Activated CD4-positive, alpha-beta T cell treated with anti-CD3 and anti-CD28 coated beads, Interleukin-2, amount 10 ng/mL, durations not matched to agents 24 days and 14 days (primary cell): ENCODE measurements at regions of chr6 and their contacts with region 1.

Region 1: GRCh38 chr6:24883618-24884017 is 52.1 kb downstream of the RIPOR2 start:
- DNase-seq: no peak
- H3K4me3 Mint-ChIP-seq: peak overlapping the region; percentile 67
- H3K27ac Mint-ChIP-seq: peak overlapping the region; percentile 94
- H3K4me1 Mint-ChIP-seq: peaks cover 60% of the 10 kb centered on the region
- H3K27me3 Mint-ChIP-seq: no peaks in the 10 kb centered on the region

Region 2: DNA sequence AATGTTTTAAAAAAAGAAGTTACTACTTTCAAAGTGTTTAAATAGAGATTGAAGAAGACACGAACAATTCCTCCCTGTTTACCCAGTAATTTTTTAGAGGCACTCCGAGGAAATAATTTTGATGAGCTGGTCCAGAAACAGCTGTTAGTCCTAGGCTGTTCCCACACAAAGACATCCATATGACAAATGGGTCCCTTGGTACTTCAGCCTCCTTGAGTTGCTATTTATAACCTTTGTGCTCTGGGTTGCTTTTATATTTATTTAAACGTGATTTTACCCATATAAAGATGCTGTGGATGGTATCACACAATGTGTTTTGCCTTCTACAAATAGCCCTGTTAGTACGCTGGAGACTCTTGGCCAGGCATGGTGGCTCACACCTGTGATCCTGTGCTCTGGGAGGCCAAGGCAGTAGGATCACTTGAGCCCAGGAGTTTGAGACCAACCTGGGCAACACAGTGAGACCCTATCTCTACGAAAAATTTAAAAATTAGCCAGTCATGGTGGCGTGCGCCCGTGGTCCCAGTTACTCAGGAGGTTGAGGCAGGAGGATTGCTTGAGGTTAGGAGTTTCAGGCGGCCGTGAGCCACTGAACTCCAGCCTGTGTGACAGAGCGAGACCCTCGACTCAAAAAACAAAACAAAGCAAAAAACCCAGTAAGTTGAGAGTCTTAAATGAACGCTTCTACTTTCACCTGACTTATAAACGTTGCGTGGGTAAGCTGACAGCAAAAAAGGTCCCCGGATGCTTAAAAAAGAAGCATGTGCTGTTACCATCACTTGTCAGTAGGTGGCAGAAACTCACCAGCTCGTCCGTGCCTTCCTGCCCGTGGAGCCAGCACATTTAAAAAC is 28.0 kb before region 1 on chr6:
- intact Hi-C with region 1: loop called (anchors 1 kb)
- DNase-seq: peak; percentile 91
- H3K4me3 Mint-ChIP-seq: peak overlapping the region; percentile 32
- H3K27ac Mint-ChIP-seq: peak overlapping the region; percentile 91
- H3K4me1 Mint-ChIP-seq: peaks cover 49% of the 10 kb centered on the region
- H3K27me3 Mint-ChIP-seq: no peaks in the 10 kb centered on the region

Region 3: GRCh38 chr6:24867104-24867703 is 16.4 kb before region 1 on chr6:
- intact Hi-C with region 1: no loop called
- DNase-seq: no peak
- H3K4me3 Mint-ChIP-seq: no peak overlapping the region
- H3K27ac Mint-ChIP-seq: peak overlapping the region; percentile 37
- H3K4me1 Mint-ChIP-seq: peaks cover 36% of the 10 kb centered on the region
- H3K27me3 Mint-ChIP-seq: no peaks in the 10 kb centered on the region

Region 4: DNA sequence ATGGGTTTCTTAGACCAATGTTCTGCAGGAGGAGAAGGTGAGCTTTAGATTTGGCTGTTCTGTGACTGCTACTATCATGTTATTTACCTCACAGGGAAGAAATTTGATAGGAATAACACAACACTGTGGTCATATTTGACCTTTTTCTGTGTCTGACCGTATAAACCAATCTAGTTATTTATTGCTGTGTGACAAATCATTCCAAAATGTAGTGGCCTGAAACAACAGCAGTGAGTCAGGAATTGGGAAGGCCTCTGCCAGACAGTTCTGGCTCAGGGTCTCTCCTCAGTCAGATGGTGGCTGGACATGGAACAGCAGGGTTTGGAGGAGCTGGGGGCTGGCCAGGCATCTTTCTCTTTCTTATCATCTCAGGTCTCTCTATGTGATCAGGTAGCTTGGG is 19.2 kb after region 1 on chr6:
- intact Hi-C with region 1: loop called (anchors 2 kb)
- DNase-seq: no peak
- H3K4me3 Mint-ChIP-seq: peak overlapping the region; percentile 23
- H3K27ac Mint-ChIP-seq: peak overlapping the region; percentile 90
- H3K4me1 Mint-ChIP-seq: peaks cover 75% of the 10 kb centered on the region
- H3K27me3 Mint-ChIP-seq: no peaks in the 10 kb centered on the region

Region 5: GRCh38 chr6:24910961-24911712 is 27.5 kb after region 1 on chr6:
- intact Hi-C with region 1: loop called (anchors 2 kb)
- DNase-seq: peak; percentile 82
- H3K4me3 Mint-ChIP-seq: peak overlapping the region; percentile 86
- H3K27ac Mint-ChIP-seq: peak overlapping the region; percentile 93
- H3K4me1 Mint-ChIP-seq: peaks cover 75% of the 10 kb centered on the region
- H3K27me3 Mint-ChIP-seq: no peaks in the 10 kb centered on the region

Region 6: DNA sequence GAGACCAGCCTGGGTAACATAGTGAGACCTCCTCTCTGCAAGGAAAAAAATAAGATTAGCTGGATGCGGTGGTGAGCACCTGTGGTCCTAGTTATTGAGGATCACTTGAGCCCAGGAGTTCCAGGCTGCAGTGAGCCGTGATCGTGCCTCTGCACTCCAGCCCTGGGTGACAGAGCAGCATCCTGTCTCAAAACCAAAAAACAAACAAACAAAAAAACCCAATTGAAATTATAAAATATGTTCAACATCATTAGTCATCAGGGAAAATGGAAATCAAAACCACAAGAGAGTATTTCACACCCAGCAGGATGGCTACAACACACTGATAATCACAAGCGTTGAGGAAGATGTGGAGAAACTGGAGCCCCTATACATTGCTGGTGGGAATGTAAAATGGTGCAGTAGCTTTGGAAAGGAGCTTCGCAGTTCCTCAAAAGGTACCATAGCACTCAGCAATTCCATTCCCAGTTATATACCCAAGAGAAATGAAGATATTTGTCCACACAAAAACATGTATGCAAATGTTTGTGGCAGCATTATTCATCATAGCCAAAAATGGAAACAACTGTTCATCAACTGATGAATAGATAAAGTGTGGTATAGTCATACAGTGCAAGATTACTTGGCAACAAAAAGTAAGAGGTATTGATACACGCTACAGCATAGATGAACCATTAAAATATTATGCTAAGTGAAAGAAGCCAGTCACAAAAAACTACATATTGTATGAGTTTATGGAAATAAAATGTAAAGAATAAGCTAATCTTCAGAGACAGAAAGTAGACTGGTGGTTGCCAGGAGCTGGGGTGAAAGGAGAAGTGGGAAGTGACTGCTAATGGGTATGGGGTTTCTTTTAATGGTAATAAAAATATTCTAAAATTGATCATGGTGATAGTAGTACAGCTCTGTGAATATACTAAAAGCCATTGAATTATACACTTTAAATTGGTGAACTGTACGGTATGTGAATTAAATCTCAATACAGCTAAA is 90.9 kb after region 1 on chr6:
- intact Hi-C with region 1: loop called (anchors 1 kb)
- DNase-seq: peak; percentile 71
- H3K4me3 Mint-ChIP-seq: peak overlapping the region; percentile 60
- H3K27ac Mint-ChIP-seq: peak overlapping the region; percentile 91
- H3K4me1 Mint-ChIP-seq: peaks cover 31% of the 10 kb centered on the region
- H3K27me3 Mint-ChIP-seq: no peaks in the 10 kb centered on the region